Brain microvascular endothelial cell (primary cell): ENCODE measurements at regions of chr17 and their contacts with region 1.

Region 1: GRCh38 chr17:57855391-57856035 is 5.7 kb upstream of the MRPS23 start:
- DNase-seq: no peak
- H3K4me3 ChIP-seq: no peak overlapping the region
- H3K27ac ChIP-seq: no peak overlapping the region
- H3K27me3 ChIP-seq: no peaks in the 10 kb centered on the region
- CTCF ChIP-seq: no peak

Region 2: DNA sequence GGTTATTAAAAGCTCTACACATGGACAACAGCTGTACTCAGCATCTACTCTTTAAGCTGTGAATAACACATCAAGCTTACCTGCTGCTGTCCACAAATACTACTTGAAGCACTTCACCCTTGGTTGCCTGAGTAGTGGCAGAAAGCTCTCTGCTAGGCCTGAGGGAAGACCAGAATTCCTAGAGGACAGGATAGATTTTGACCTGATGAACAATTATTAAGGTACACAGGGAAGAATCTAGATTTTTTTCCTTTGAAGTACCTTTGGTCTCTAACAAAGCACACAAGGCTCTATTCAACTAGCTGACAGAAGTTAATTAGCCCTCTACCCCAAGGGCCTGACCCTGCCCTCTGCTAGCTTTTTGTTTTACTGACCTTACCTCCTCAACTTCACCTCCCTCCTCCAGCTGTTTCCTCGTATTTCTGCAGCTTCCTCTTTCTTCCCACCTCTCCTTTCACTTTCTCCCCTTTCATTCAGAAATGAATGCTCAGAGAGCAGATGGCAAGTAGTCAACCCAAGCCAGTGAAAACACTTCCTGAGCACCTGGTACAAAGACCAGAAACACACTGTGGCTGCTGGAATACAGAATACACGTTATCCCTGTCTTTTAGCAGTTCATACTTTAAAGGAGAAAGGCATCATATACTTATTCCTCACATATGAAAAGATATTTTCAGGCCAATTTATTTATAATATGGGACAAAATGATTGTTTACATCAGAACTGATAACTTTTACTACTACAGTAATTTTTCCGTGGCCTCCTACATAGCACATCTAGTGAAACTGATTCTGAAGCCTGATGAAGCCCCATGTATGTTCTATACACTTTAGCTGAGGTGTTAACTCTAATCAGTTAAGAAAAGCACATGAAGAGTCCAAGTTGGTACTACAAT is 138.2 kb after region 1 on chr17:
- in situ Hi-C with region 1: loop called (anchors 5 kb)
- DNase-seq: no peak
- H3K4me3 ChIP-seq: no peak overlapping the region
- H3K27ac ChIP-seq: no peak overlapping the region
- H3K27me3 ChIP-seq: no peaks in the 10 kb centered on the region
- CTCF ChIP-seq: no peak

Region 3: DNA sequence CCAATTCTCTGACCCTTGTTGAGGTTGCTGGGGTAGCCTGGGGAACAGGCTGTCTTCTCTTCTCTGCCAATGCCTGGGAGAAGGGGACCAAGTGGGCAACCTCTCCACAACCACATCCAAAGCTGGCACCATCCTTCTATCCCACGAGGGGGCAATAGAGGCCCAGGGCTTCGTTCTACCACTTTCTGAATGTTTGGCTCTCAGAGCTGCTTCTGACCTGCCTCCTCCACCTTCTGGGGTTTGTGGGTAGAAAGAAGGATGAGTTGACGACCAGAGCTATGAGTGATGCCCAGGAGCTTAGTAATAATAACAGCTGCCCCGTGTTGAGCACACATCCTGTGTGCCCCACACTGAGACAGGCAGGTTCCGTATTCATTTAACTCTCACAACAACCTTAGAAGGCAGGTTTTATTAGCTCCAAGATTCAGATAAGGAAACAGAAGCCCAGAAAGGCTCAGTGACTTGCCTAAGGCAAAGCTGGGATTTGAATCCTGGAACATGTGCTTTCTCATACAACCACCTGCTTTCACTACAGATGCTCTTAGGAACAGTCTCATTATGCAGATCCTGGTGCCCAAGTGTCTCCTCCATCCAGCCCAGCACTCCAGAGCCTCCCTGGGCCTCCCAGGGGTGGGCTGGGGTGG is 462.0 kb after region 1 on chr17:
- in situ Hi-C with region 1: no loop called
- DNase-seq: peak; percentile 39
- H3K4me3 ChIP-seq: no peak overlapping the region
- H3K27ac ChIP-seq: no peak overlapping the region
- H3K27me3 ChIP-seq: no peaks in the 10 kb centered on the region
- CTCF ChIP-seq: peak; percentile 86